GM12878 (cell line): ENCODE measurements at regions of chr1 and their contacts with region 1.

Region 1: DNA sequence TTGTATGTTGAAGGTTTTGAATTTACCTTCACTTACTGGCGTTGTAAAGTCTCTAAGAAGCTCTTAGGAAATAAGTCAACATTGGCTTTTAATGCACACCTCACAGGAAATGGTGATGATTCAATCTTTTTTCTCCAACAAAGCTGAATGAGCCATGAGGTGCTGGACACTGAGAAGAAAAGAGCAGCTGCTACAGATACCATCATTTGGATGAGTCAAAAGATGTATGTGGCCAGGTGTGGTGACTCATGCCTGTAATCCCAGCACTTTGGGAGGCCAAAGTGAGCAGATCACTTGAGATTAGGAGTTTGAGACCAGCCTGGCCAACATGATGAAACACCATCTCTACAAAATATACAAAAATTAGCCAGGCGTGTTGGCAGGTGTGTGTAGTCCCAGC is 3.3 kb upstream of the IL23R start:
- DNase-seq: no peak
- ATAC-seq: peak; percentile 53
- H3K4me3 ChIP-seq: no peak overlapping the region
- H3K27ac ChIP-seq: no peak overlapping the region
- H3K4me1 ChIP-seq: peaks cover 3% of the 10 kb centered on the region; the same call in 1 of the 2 replicates
- H3K27me3 ChIP-seq: no peaks in the 10 kb centered on the region
- CTCF ChIP-seq: no peak
- EP300 ChIP-seq: no peak; a peak in 1 of 4 replicates
- POLR2A ChIP-seq: no peak
- RAD21 ChIP-seq: no peak

Region 2: GRCh38 chr1:67194209-67194863 is 31.4 kb after region 1 on chr1:
- CTCF ChIA-PET with region 1: interaction called, 4 read pairs
- POLR2A ChIA-PET with region 1: interaction called, 14 read pairs
- RAD21 ChIA-PET with region 1: interaction called, 9 read pairs
- SMC1A ChIA-PET with region 1: interaction called, 40 read pairs
- in situ Hi-C with region 1: no loop called
- intact Hi-C with region 1: no loop called
- DNase-seq: peak; percentile 67
- ATAC-seq: peak; percentile 75
- H3K4me3 ChIP-seq: no peak overlapping the region
- H3K27ac ChIP-seq: no peak overlapping the region
- H3K4me1 ChIP-seq: peaks cover 20% of the 10 kb centered on the region
- H3K27me3 ChIP-seq: no peaks in the 10 kb centered on the region
- CTCF ChIP-seq: no peak
- EP300 ChIP-seq: peak; percentile 94 to 97
- POLR2A ChIP-seq: no peak
- RAD21 ChIP-seq: no peak

Region 3: GRCh38 chr1:67460676-67461500 is 297.9 kb after region 1 on chr1:
- CTCF ChIA-PET with region 1: no interaction called
- POLR2A ChIA-PET with region 1: no interaction called
- RAD21 ChIA-PET with region 1: no interaction called
- SMC1A ChIA-PET with region 1: no interaction called
- in situ Hi-C with region 1: no loop called
- intact Hi-C with region 1: no loop called
- DNase-seq: no peak
- ATAC-seq: no peak
- H3K4me3 ChIP-seq: no peak overlapping the region
- H3K27ac ChIP-seq: no peak overlapping the region
- H3K4me1 ChIP-seq: no peaks in the 10 kb centered on the region
- H3K27me3 ChIP-seq: peaks cover 0 to 2% of the 10 kb centered on the region in 2 experiments; a peak in 1 of 4 replicates
- CTCF ChIP-seq: no peak
- EP300 ChIP-seq: no peak
- POLR2A ChIP-seq: no peak
- RAD21 ChIP-seq: no peak